ENCODE measurements at regions of chr10 and their contacts with region 1.

Region 1: DNA sequence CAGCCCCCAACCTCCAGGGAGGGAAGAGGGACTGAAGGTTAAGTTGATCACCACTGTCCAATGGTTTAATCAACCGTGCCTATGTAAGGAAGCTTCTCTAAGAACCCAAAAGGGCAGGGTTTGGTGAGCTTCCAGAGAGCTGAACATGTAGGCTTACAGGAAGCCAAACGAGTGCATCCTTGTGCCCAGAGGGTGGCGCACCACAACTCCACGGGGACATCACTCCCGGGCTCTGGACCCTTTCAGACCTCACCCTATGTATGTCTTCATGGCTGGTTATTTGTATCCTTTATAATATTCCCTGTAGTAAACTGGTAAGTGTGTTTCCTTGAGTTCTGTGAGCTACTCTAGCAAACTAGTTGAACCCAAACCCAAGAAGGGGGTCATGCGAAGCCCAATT is 11.5 kb upstream of the NFKB2 start:
- DNase-seq: peak in 4 of 9 experiments; percentile 26 to 52 (median 38)
- ATAC-seq: peak; percentile 42
- H3K4me3 ChIP-seq: no peak overlapping the region
- H3K4me3 Mint-ChIP-seq: no peak overlapping the region
- H3K27ac ChIP-seq: no peak overlapping the region
- H3K27ac Mint-ChIP-seq: no peak overlapping the region
- H3K4me1 ChIP-seq: no peaks in the 10 kb centered on the region
- H3K4me1 Mint-ChIP-seq: no peaks in the 10 kb centered on the region
- H3K27me3 ChIP-seq: no peaks in the 10 kb centered on the region
- H3K27me3 Mint-ChIP-seq: no peaks in the 10 kb centered on the region
- CTCF ChIP-seq: no peak

Region 2: DNA sequence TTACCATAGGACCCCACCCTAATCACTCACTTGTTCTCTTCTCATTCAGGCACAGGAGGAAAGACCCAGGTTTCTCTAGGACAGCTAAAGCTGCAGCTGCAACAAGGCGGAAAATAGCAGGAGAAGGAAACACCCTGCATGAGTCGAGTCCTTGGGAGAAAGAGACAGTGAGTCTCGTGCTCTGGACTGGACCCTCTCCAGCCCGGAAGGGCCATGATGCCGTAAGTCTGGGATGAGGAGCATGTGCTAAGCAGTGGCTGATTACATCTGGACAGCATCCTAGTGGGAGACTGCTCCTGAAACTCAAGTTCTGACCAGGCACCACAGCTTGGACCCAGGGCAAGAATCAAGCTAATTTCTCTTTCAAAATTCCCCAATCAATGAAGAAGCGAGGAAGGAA is 728.5 kb before region 1 on chr10:
- CTCF ChIA-PET with region 1: no interaction called
- POLR2A ChIA-PET with region 1: no interaction called
- intact Hi-C with region 1: no loop called
- DNase-seq: no peak
- ATAC-seq: no peak
- H3K4me3 ChIP-seq: no peak overlapping the region
- H3K4me3 Mint-ChIP-seq: no peak overlapping the region
- H3K27ac ChIP-seq: no peak overlapping the region
- H3K27ac Mint-ChIP-seq: no peak overlapping the region
- H3K4me1 ChIP-seq: no peaks in the 10 kb centered on the region
- H3K4me1 Mint-ChIP-seq: peaks cover 10% of the 10 kb centered on the region
- H3K27me3 ChIP-seq: no peaks in the 10 kb centered on the region
- H3K27me3 Mint-ChIP-seq: no peaks in the 10 kb centered on the region
- CTCF ChIP-seq: no peak

Region 3: GRCh38 chr10:102399217-102400089 is 15.4 kb after region 1 on chr10:
- CTCF ChIA-PET with region 1: interaction called, 20 read pairs
- POLR2A ChIA-PET with region 1: interaction called, 5 read pairs
- intact Hi-C with region 1: no loop called
- DNase-seq: peak; percentile 78 to 95 (median 87)
- ATAC-seq: peak; percentile 51
- H3K4me3 ChIP-seq: peak overlapping the region; percentile 44 to 65
- H3K4me3 Mint-ChIP-seq: peak overlapping the region; percentile 76
- H3K27ac ChIP-seq: peak overlapping the region; percentile 59 to 86
- H3K27ac Mint-ChIP-seq: peak overlapping the region; percentile 81
- H3K4me1 ChIP-seq: peaks cover 30% of the 10 kb centered on the region
- H3K4me1 Mint-ChIP-seq: peaks cover 38% of the 10 kb centered on the region
- H3K27me3 ChIP-seq: no peaks in the 10 kb centered on the region
- H3K27me3 Mint-ChIP-seq: no peaks in the 10 kb centered on the region
- CTCF ChIP-seq: peak; percentile 89

Region 4: GRCh38 chr10:102435529-102436233 is 51.6 kb after region 1 on chr10:
- CTCF ChIA-PET with region 1: no interaction called
- POLR2A ChIA-PET with region 1: no interaction called
- intact Hi-C with region 1: no loop called
- DNase-seq: peak in 2 of 9 experiments; percentile 32 to 47
- ATAC-seq: no peak
- H3K4me3 ChIP-seq: peak overlapping the region; percentile 48
- H3K4me3 Mint-ChIP-seq: peak overlapping the region; percentile 78
- H3K27ac ChIP-seq: peak overlapping the region; percentile 33 to 59
- H3K27ac Mint-ChIP-seq: peak overlapping the region; percentile 85
- H3K4me1 ChIP-seq: peaks cover 58% of the 10 kb centered on the region
- H3K4me1 Mint-ChIP-seq: peaks cover 54% of the 10 kb centered on the region
- H3K27me3 ChIP-seq: no peaks in the 10 kb centered on the region
- H3K27me3 Mint-ChIP-seq: no peaks in the 10 kb centered on the region
- CTCF ChIP-seq: no peak